ENCODE measurements at regions of chr4 and their contacts with region 1.

Region 1: DNA sequence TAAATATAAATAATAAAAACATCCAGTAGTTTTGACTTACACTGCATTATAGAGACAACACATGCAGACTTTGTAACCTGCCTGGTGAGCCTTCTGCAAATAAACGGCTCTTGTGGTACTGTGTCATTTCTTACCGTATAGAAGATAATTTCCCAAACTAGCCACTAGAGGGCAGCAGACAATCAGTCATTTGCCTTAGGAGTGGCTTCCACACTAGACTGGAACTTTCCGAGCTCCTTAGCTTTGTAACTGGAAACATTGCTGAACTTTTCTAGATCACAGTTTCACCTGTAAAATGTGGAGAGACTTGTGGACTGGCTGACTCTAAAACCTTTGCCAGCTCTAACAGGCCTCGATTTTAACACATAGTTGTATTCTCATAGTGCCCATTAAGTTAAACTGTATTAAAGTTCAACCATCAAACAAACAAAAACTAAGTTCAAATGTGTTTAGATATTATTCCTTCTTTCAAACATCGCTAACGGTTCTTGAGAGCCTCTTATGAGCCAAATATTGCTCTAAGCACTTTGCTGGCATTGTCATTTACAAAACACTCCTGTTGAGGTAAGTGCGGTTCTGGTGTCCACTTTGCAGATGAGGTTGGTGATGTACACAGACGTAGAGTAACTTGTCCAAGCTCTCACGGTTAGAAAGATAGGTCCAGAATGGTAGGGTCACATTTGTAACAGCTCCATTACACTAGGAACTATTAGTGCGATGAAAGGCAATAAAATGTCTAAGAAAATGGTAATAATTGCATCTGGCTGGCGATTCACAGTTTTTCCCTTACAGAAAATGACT is 345.5 kb downstream of the ANK2 start:
- DNase-seq: peak; percentile 74
- H3K4me3 ChIP-seq: no peak overlapping the region
- H3K27ac ChIP-seq: no peak overlapping the region
- H3K27me3 ChIP-seq: no peaks in the 10 kb centered on the region
- CTCF ChIP-seq: peak; percentile 74

Region 2: DNA sequence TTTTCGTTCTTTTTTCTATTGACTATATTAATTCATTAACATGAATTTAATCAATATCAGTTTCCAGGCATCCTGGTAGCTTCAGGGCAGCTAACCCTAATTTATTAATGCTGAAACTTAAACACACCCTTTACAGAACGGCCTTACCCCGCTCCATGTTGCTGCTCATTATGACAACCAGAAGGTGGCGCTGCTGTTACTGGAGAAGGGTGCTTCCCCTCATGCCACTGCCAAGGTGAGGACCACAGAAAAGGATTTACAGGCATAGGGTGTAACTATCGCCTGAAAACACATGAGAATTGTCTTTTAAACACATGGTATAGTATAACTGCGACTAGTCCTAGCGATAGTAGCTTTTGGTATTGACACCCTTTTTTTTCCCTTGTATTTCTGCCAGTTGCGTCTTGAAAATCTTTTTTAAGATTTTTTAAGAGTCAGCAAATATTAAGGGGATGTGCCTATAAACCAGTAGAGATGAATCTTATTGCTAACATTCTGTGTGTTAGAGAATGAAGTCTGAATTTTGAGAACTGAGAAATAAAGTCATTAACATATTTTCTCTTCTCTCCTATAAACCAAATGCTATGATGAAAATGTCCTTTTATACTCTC is 116.5 kb before region 1 on chr4:
- CTCF ChIA-PET with region 1: interaction called, 12 read pairs
- POLR2A ChIA-PET with region 1: no interaction called
- DNase-seq: peak; percentile 61
- H3K4me3 ChIP-seq: no peak overlapping the region
- H3K27ac ChIP-seq: no peak overlapping the region
- H3K27me3 ChIP-seq: no peaks in the 10 kb centered on the region
- CTCF ChIP-seq: peak; percentile 97

Region 3: GRCh38 chr4:113378836-113379235 is 16.1 kb before region 1 on chr4:
- CTCF ChIA-PET with region 1: no interaction called
- POLR2A ChIA-PET with region 1: no interaction called
- DNase-seq: no peak
- H3K4me3 ChIP-seq: no peak overlapping the region
- H3K27ac ChIP-seq: no peak overlapping the region
- H3K27me3 ChIP-seq: no peaks in the 10 kb centered on the region
- CTCF ChIP-seq: no peak

Region 4: DNA sequence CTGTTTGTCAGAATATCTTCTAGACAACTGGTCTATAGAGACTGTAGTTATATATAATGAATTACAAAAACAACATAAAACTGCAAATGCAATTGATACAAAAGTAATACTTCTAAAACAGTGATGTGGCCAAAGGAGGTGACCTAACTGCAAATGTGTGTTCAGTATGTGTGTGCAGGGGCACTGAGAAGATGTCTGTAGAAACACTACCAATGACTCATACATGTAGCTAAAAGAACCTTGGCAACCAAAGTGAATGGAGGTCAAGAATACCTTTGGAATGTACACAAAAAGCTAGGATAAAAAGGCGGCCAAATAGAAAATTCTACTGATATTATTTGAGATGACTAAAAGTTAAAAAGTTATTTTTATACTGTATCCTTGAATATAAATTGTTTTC is 104.8 kb after region 1 on chr4:
- CTCF ChIA-PET with region 1: interaction called, 12 read pairs
- POLR2A ChIA-PET with region 1: no interaction called
- DNase-seq: peak; percentile 71
- H3K4me3 ChIP-seq: no peak overlapping the region
- H3K27ac ChIP-seq: no peak overlapping the region
- H3K27me3 ChIP-seq: no peaks in the 10 kb centered on the region
- CTCF ChIP-seq: no peak

Region 5: GRCh38 chr4:114378306-114378903 is 983.5 kb after region 1 on chr4:
- CTCF ChIA-PET with region 1: interaction called, 26 read pairs
- POLR2A ChIA-PET with region 1: no interaction called
- DNase-seq: peak; percentile 15
- H3K4me3 ChIP-seq: no peak overlapping the region
- H3K27ac ChIP-seq: no peak overlapping the region
- H3K27me3 ChIP-seq: no peaks in the 10 kb centered on the region
- CTCF ChIP-seq: peak; percentile 73

Region 6: GRCh38 chr4:114386637-114387233 is 991.8 kb after region 1 on chr4:
- CTCF ChIA-PET with region 1: interaction called, 26 read pairs
- POLR2A ChIA-PET with region 1: no interaction called
- DNase-seq: no peak
- H3K4me3 ChIP-seq: no peak overlapping the region
- H3K27ac ChIP-seq: no peak overlapping the region
- H3K27me3 ChIP-seq: peaks cover 6% of the 10 kb centered on the region
- CTCF ChIP-seq: peak; percentile 61

Region 7: DNA sequence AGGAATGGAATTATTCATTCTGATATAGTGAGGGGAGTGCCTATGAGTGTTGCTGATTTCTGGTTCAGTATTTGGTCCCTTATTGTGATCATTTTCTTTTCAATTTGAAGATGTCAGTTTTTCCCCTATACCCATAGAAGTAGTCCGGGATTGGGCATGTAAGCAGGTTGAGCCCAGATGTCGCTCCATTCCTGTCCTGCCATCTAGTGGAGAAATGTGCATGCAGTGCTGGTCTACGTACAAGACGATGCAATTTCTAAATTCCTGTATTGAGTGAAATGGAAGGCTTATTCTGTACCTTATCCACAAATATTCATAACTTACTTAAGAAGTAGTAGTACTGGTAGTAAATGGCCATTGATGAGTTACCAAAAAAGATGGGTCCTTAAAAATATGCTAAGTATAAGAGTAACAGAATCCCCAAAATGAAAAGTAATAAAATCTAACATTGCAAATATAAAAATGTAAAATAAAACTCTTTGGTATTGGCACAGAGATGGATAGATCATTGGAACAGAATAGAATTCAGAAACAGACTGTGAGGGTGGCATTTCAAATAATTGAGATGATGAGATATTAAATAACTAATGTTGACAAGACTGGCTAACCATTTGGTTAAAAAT is 1264.6 kb after region 1 on chr4:
- CTCF ChIA-PET with region 1: interaction called, 14 read pairs
- POLR2A ChIA-PET with region 1: no interaction called
- DNase-seq: peak; percentile 16
- H3K4me3 ChIP-seq: no peak overlapping the region
- H3K27ac ChIP-seq: no peak overlapping the region
- H3K27me3 ChIP-seq: no peaks in the 10 kb centered on the region
- CTCF ChIP-seq: peak; percentile 89